Activated CD4-positive, alpha-beta memory T cell treated with anti-CD3 and anti-CD28 coated beads for 36 hours (primary cell): ENCODE measurements at regions of chr13 and their contacts with region 1.

Region 1: GRCh38 chr13:102596147-102597028 is at the start of gene TPP2:
- DNase-seq: peak; percentile 99
- H3K4me3 Mint-ChIP-seq: peak within 1 kb of the TSS; percentile 99
- H3K27ac Mint-ChIP-seq: peak within 1 kb of the TSS; percentile 100
- H3K4me1 Mint-ChIP-seq: peaks cover 60% of the 10 kb centered on the region
- H3K27me3 Mint-ChIP-seq: no peaks in the 10 kb centered on the region
- total RNA-seq, gene TPP2: 64.7 to 65.6 TPM

Region 2: GRCh38 chr13:101649490-101650126 is 946.8 kb before region 1 on chr13:
- CTCF ChIA-PET with region 1: no interaction called
- POLR2A ChIA-PET with region 1: no interaction called
- intact Hi-C with region 1: no loop called
- DNase-seq: no peak
- H3K4me3 Mint-ChIP-seq: no peak overlapping the region
- H3K27ac Mint-ChIP-seq: no peak overlapping the region
- H3K4me1 Mint-ChIP-seq: no peaks in the 10 kb centered on the region
- H3K27me3 Mint-ChIP-seq: peaks cover 23% of the 10 kb centered on the region

Region 3: DNA sequence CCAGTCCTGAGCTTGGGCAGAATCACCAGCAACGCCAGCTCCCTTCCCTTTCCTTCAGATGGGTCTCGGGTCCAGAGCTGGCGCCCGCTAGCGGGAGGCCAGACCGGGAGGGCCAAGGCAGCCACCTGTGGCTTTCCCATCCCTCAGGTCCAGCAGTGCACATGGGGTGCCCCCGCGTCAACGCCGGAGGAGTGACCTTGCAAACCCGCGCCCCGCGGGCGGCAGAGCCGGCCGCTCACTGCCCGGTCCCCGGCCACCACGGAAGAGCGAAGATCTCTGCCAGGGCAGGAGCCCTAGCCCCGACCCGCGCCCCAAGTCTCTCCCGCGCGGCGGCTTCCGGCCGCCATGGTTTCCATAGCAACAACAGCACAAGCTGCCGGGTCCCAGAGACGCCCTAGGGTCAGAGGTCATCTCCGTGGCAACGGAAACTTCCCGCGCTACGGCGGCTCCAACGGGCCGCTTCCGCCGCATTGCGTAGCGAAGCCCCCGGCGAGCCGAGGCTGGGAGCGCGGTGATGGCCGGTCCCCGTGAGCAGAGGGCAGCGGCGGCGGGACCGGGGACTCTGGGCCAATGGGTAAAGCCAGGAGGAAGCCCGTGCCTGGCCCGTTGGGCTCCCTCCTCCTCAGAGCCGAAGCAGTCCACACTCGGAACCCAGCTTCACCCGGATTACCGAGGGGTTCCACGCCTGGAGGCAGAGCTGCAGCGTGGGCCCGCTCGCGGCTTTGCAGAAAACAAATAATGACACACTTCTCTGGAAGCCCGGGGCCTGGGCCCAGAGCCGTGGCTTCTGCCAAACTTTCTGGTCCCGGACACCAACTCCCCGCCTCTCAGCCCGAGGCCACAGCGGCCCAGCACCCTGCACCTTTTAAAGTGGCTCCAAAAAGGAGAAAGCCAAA is 202.0 kb before region 1 on chr13:
- CTCF ChIA-PET with region 1: interaction called, 3 read pairs
- POLR2A ChIA-PET with region 1: no interaction called
- intact Hi-C with region 1: loop called (anchors 2 kb)
- DNase-seq: peak; percentile 97
- H3K4me3 Mint-ChIP-seq: peak overlapping the region; percentile 78
- H3K27ac Mint-ChIP-seq: peak overlapping the region; percentile 69
- H3K4me1 Mint-ChIP-seq: peaks cover 21% of the 10 kb centered on the region
- H3K27me3 Mint-ChIP-seq: peaks cover 10% of the 10 kb centered on the region

Region 4: DNA sequence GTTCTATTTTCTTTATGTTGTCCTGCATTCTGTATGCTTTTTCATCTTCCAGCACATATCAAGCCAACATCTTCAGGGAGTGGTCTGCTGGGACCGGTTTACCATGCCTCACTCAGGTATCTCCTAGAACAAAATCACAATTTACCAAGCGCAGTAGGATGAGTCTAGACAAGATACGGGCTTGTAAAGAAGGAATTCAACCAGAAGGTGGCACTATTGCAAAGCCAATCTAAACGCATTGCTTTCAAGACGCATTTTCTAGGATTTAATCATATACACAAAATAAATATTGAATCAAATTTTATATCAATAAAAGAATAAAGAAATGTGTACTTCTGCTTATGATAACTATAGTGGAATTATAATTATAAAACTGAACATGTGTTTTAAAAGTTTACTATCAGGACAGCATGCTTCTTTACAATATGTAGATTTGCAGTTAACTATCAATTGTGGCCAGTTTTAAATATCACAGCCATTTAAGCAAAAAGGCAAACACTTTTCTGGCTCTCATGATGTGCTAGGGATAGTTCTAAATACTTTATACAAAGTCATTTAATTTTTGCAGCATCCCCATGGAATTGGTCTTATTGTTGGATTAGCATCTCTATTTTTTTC is 15.7 kb before region 1 on chr13:
- CTCF ChIA-PET with region 1: interaction called, 27 read pairs
- POLR2A ChIA-PET with region 1: interaction called, 5 read pairs
- intact Hi-C with region 1: no loop called
- DNase-seq: no peak
- H3K4me3 Mint-ChIP-seq: no peak overlapping the region
- H3K27ac Mint-ChIP-seq: no peak overlapping the region
- H3K4me1 Mint-ChIP-seq: peaks cover 4% of the 10 kb centered on the region
- H3K27me3 Mint-ChIP-seq: peaks cover 1% of the 10 kb centered on the region

Region 5: GRCh38 chr13:102609696-102610095 is 13.3 kb after region 1 on chr13:
- CTCF ChIA-PET with region 1: interaction called, 9 read pairs
- POLR2A ChIA-PET with region 1: interaction called, 14 read pairs
- intact Hi-C with region 1: loop called (anchors 1 kb)
- DNase-seq: peak; percentile 28
- H3K4me3 Mint-ChIP-seq: no peak overlapping the region
- H3K27ac Mint-ChIP-seq: peak overlapping the region; percentile 40
- H3K4me1 Mint-ChIP-seq: peaks cover 45% of the 10 kb centered on the region
- H3K27me3 Mint-ChIP-seq: no peaks in the 10 kb centered on the region

Region 6: DNA sequence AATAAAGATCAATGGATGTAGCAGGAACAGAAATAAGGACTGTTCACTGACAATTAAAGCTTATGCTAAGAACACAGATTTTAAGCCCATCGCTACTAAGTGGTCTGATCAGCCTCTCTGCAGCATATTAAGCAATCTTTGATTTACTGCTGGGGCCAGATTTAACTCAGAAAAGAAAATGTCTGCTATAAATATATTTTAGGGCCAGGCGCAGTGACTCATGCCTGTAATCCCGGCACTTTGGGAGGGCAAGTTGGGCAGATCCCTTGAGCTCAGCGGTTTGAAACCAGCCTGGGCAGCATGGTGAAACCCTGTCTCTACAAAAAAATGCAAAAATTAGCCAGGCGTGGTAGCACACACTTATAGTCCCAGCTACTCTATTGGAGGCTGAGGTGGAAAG is 55.5 kb after region 1 on chr13:
- CTCF ChIA-PET with region 1: no interaction called
- POLR2A ChIA-PET with region 1: no interaction called
- intact Hi-C with region 1: loop called (anchors 5 kb)
- DNase-seq: no peak
- H3K4me3 Mint-ChIP-seq: no peak overlapping the region
- H3K27ac Mint-ChIP-seq: no peak overlapping the region
- H3K4me1 Mint-ChIP-seq: peaks cover 2% of the 10 kb centered on the region
- H3K27me3 Mint-ChIP-seq: no peaks in the 10 kb centered on the region

Region 7: GRCh38 chr13:102773441-102774215 is 177.2 kb after region 1 on chr13 and contains the start of gene TEX30:
- CTCF ChIA-PET with region 1: interaction called, 3 read pairs
- POLR2A ChIA-PET with region 1: interaction called, 11 read pairs
- intact Hi-C with region 1: loop called (anchors 1 kb)
- DNase-seq: peak; percentile 89
- H3K4me3 Mint-ChIP-seq: peak within 1 kb of the TSS; percentile 85
- H3K27ac Mint-ChIP-seq: peak within 1 kb of the TSS; percentile 94
- H3K4me1 Mint-ChIP-seq: peaks cover 39% of the 10 kb centered on the region
- H3K27me3 Mint-ChIP-seq: no peaks in the 10 kb centered on the region
- total RNA-seq, gene TEX30: 42.6 to 43.2 TPM

Region 8: DNA sequence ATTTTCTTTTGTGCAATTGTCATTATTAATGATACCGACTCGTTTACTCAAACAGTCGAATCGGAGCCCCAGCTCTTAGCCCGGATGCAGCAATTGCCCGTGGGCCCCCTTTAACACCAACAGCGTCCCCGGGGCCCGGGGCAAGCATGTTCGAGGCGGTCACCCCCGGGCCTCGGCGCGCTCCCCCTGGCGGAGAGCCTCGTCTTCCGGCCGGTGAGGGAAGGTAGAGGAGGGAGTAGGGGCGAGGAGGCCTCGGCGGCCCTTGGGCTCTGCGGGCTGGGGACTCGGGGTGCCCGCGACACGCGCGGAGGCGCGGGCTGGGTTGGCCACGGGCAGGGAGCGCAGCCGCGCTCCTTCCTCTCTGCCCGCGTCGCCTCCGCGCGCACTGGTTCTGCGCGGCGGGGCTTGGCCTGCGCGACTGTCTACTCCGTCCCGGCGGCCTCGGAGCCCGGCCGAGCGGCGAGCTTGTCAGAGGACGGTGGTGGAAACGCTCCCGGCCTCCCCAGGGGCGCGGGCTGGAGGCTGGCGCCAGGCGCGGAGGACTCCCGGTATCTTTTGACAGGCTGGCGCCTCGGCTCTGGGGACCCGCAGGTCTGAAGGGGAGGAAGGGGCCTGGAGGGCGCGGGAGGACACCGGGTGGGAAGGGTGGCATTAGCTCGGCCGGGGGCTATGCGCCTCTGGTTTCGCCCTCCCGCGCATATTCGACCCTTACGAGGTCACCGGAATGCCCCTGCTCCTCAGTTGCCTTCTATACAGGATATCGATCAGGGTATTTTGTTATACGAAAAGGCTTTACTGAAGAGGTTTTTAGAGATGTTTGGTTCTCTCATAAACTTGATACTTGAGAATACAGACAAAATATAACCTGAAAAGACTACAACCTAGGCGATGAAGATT is 204.0 kb after region 1 on chr13:
- CTCF ChIA-PET with region 1: interaction called, 22 read pairs
- POLR2A ChIA-PET with region 1: interaction called, 11 read pairs
- intact Hi-C with region 1: loop called (anchors 1 kb)
- DNase-seq: peak; percentile 88
- H3K4me3 Mint-ChIP-seq: peak overlapping the region; percentile 90
- H3K27ac Mint-ChIP-seq: peak overlapping the region; percentile 38
- H3K4me1 Mint-ChIP-seq: peaks cover 22% of the 10 kb centered on the region
- H3K27me3 Mint-ChIP-seq: peaks cover 5% of the 10 kb centered on the region